HepG2 (cell line): ENCODE measurements at regions of chr4 and their contacts with region 1.

Region 1: DNA sequence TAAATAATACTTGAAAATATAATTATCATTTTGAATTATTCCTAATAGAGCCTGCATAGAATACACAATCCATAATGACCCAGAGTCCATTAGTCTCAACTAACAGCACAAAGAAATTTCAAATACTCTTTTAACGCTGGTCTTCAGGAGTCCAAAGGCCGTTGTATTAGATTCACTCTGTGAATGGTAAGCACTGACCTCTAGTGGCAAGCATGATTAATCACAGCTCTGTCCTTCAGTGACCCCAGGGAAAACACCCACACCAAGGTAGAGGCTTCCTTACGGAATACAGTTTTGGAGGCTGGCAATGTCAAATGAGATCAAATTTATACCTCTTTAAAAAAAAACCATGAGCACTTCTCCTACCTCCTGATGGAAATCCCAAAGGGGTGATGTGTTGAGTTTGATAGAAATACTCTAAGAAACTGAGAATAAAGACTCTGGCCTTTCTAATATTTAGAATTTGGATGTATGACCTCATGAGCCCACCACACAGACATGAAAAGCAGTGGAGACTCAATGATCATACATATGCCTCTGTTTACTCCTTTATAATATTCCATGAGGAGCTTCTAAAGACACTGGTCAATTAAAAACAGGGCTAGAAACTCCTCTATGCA is 147.2 kb upstream of the DKK2 start:
- DNase-seq: peak; percentile 67
- ATAC-seq: peak; percentile 99
- H3K4me3 ChIP-seq: no peak overlapping the region
- H3K27ac ChIP-seq: no peak overlapping the region
- H3K4me1 ChIP-seq: no peaks in the 10 kb centered on the region
- H3K27me3 ChIP-seq: no peaks in the 10 kb centered on the region
- CTCF ChIP-seq: peak; percentile 82
- EP300 ChIP-seq: no peak
- POLR2A ChIP-seq: no peak
- RAD21 ChIP-seq: peak; percentile 45; the same call in 1 of the 2 replicates

Region 2: DNA sequence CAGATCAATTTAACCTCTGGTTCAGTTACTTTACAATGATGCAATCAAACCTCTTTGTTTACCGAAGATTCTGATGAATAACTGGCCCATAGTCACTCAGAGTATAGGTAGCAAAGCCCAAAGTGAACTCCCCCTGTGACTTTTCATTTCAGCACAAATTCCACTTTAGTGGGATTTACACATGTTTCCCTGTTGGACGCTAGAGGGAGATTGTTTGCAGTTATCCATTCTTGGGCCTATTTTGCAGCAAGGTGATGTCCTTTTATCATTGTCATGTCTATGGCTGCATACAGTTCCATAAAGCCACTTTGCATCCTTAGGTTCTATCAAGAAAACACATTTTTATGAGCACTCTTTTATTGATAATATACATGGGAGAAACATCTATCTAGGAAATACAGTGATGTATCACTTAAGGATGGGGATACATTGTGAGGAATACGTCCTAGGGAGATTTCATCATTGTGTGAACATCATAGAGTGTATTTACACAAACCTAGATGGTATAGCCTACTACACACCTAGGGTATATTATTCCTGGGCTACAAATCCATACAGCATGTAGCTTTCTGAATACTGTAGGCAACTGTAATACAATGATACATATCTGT is 132.6 kb before region 1 on chr4:
- CTCF ChIA-PET with region 1: interaction called, 8 read pairs
- POLR2A ChIA-PET with region 1: no interaction called
- in situ Hi-C with region 1: no loop called
- intact Hi-C with region 1: loop called (anchors 1 kb)
- DNase-seq: peak; percentile 13
- ATAC-seq: peak; percentile 63
- H3K4me3 ChIP-seq: no peak overlapping the region
- H3K27ac ChIP-seq: no peak overlapping the region
- H3K4me1 ChIP-seq: no peaks in the 10 kb centered on the region
- H3K27me3 ChIP-seq: no peaks in the 10 kb centered on the region
- CTCF ChIP-seq: peak; percentile 72
- EP300 ChIP-seq: no peak
- POLR2A ChIP-seq: no peak
- RAD21 ChIP-seq: no peak

Region 3: GRCh38 chr4:107164962-107165475 is 18.2 kb before region 1 on chr4:
- CTCF ChIA-PET with region 1: no interaction called
- POLR2A ChIA-PET with region 1: no interaction called
- in situ Hi-C with region 1: no loop called
- intact Hi-C with region 1: no loop called
- DNase-seq: no peak
- ATAC-seq: no peak
- H3K4me3 ChIP-seq: no peak overlapping the region
- H3K27ac ChIP-seq: no peak overlapping the region
- H3K4me1 ChIP-seq: no peaks in the 10 kb centered on the region
- H3K27me3 ChIP-seq: no peaks in the 10 kb centered on the region
- CTCF ChIP-seq: no peak
- EP300 ChIP-seq: no peak
- POLR2A ChIP-seq: no peak
- RAD21 ChIP-seq: no peak

Region 4: DNA sequence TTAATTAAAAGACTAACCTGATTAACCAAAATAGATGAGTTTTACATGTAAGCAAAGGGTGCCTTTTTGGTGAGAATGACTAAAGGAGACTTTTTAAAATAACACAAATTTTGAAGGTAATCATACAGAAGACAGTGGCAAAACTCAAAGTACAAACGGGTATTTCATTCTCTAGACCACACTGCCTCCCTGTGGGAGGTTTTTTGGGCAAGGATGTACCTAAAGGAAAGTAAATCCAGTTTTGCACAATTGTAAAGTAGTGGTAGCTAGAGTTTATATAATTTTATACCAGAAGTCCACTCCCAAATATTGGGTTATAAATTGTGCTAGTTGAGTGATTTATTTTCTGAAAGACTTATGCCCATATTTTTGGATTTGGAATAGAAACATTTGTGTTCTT is 335.8 kb after region 1 on chr4:
- CTCF ChIA-PET with region 1: no interaction called
- POLR2A ChIA-PET with region 1: no interaction called
- in situ Hi-C with region 1: no loop called
- intact Hi-C with region 1: loop called (anchors 10 kb)
- DNase-seq: peak; percentile 25
- ATAC-seq: peak; percentile 57; the same call in 2 of the 3 replicates
- H3K4me3 ChIP-seq: no peak overlapping the region
- H3K27ac ChIP-seq: no peak overlapping the region
- H3K4me1 ChIP-seq: peaks cover 15% of the 10 kb centered on the region
- H3K27me3 ChIP-seq: no peaks in the 10 kb centered on the region; a peak in 1 of 5 replicates
- CTCF ChIP-seq: peak; percentile 56
- EP300 ChIP-seq: no peak
- POLR2A ChIP-seq: no peak
- RAD21 ChIP-seq: no peak

Region 5: DNA sequence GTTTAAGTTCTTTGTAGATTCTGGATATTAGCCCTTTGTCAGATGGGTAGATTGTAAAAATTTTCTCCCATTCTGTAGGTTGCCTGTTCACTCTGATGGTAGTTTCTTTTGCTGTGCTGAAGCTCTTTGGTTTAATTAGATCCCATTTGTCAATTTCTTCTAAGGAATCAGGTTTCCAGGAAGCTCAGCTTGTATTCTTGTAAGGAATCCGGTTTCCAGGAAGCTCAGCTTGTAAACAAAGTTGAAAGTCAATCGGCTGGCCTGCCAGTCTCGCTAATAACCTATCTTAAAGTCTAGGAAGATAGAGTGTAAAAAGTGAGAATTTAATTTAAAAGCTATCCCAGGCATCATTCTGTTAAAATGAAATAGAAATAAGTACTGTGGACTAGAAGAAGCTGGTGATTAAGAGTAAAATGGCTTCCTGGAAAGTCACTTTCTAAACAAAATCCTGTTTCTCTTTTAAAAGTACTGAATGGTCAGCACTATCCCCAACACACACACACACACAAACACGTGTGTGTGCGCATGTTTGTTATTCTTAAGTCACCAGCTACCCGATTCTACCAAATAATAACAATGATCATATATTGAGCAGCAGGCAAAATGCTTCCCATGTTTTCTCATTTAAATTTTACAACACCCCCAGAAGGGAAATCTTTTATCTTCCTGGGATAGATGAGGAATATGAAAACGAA is 365.1 kb after region 1 on chr4:
- CTCF ChIA-PET with region 1: no interaction called
- POLR2A ChIA-PET with region 1: no interaction called
- in situ Hi-C with region 1: no loop called
- intact Hi-C with region 1: no loop called
- DNase-seq: no peak
- ATAC-seq: no peak
- H3K4me3 ChIP-seq: no peak overlapping the region
- H3K27ac ChIP-seq: no peak overlapping the region
- H3K4me1 ChIP-seq: no peaks in the 10 kb centered on the region
- H3K27me3 ChIP-seq: no peaks in the 10 kb centered on the region
- CTCF ChIP-seq: no peak
- EP300 ChIP-seq: no peak
- POLR2A ChIP-seq: no peak
- RAD21 ChIP-seq: no peak